Activated CD4-positive, alpha-beta T cell treated with anti-CD3 and anti-CD28 coated beads for 36 hours (primary cell): ENCODE measurements at regions of chr12 and their contacts with region 1.

Region 1: GRCh38 chr12:122752464-122753318 is at the start of gene DENR:
- DNase-seq: peak; percentile 100
- ATAC-seq: peak; percentile 95
- H3K4me3 Mint-ChIP-seq: peak within 1 kb of the TSS; percentile 92
- H3K27ac Mint-ChIP-seq: peak within 1 kb of the TSS; percentile 96
- H3K4me1 Mint-ChIP-seq: peaks cover 53% of the 10 kb centered on the region
- H3K27me3 Mint-ChIP-seq: no peaks in the 10 kb centered on the region
- total RNA-seq, gene DENR: 64.1 to 76.9 TPM

Region 2: GRCh38 chr12:122399592-122400373 is 352.9 kb before region 1 on chr12:
- CTCF ChIA-PET with region 1: interaction called, 3 read pairs
- POLR2A ChIA-PET with region 1: no interaction called
- intact Hi-C with region 1: loop called (anchors 1 to 10 kb)
- DNase-seq: peak; percentile 73
- ATAC-seq: peak; percentile 37
- H3K4me3 Mint-ChIP-seq: peak overlapping the region; percentile 43
- H3K27ac Mint-ChIP-seq: peak overlapping the region; percentile 86
- H3K4me1 Mint-ChIP-seq: peaks cover 50% of the 10 kb centered on the region
- H3K27me3 Mint-ChIP-seq: no peaks in the 10 kb centered on the region

Region 3: GRCh38 chr12:122500685-122501488 is 251.8 kb before region 1 on chr12 and contains the start of gene ZCCHC8:
- CTCF ChIA-PET with region 1: no interaction called
- POLR2A ChIA-PET with region 1: no interaction called
- intact Hi-C with region 1: loop called in 1 of 2 experiments (anchors 1 kb)
- DNase-seq: peak; percentile 99
- ATAC-seq: peak; percentile 95
- H3K4me3 Mint-ChIP-seq: peak within 1 kb of the TSS; percentile 97
- H3K27ac Mint-ChIP-seq: peak within 1 kb of the TSS; percentile 98
- H3K4me1 Mint-ChIP-seq: peaks cover 32% of the 10 kb centered on the region
- H3K27me3 Mint-ChIP-seq: no peaks in the 10 kb centered on the region
- total RNA-seq, gene ZCCHC8: 34.7 to 39.1 TPM

Region 4: GRCh38 chr12:122721057-122721545 is 31.6 kb before region 1 on chr12:
- CTCF ChIA-PET with region 1: no interaction called
- POLR2A ChIA-PET with region 1: no interaction called
- intact Hi-C with region 1: loop called in 1 of 2 experiments (anchors 1 kb)
- DNase-seq: peak; percentile 26
- ATAC-seq: peak; percentile 64
- H3K4me3 Mint-ChIP-seq: no peak overlapping the region
- H3K27ac Mint-ChIP-seq: peak overlapping the region; percentile 80
- H3K4me1 Mint-ChIP-seq: peaks cover 41% of the 10 kb centered on the region
- H3K27me3 Mint-ChIP-seq: no peaks in the 10 kb centered on the region

Region 5: GRCh38 chr12:122974274-122974891 is 221.7 kb after region 1 on chr12:
- CTCF ChIA-PET with region 1: no interaction called
- POLR2A ChIA-PET with region 1: no interaction called
- intact Hi-C with region 1: loop called in 1 of 2 experiments (anchors 1 kb)
- DNase-seq: peak; percentile 99
- ATAC-seq: peak; percentile 86
- H3K4me3 Mint-ChIP-seq: peak overlapping the region; percentile 95
- H3K27ac Mint-ChIP-seq: peak overlapping the region; percentile 100
- H3K4me1 Mint-ChIP-seq: peaks cover 21% of the 10 kb centered on the region
- H3K27me3 Mint-ChIP-seq: no peaks in the 10 kb centered on the region

Region 6: DNA sequence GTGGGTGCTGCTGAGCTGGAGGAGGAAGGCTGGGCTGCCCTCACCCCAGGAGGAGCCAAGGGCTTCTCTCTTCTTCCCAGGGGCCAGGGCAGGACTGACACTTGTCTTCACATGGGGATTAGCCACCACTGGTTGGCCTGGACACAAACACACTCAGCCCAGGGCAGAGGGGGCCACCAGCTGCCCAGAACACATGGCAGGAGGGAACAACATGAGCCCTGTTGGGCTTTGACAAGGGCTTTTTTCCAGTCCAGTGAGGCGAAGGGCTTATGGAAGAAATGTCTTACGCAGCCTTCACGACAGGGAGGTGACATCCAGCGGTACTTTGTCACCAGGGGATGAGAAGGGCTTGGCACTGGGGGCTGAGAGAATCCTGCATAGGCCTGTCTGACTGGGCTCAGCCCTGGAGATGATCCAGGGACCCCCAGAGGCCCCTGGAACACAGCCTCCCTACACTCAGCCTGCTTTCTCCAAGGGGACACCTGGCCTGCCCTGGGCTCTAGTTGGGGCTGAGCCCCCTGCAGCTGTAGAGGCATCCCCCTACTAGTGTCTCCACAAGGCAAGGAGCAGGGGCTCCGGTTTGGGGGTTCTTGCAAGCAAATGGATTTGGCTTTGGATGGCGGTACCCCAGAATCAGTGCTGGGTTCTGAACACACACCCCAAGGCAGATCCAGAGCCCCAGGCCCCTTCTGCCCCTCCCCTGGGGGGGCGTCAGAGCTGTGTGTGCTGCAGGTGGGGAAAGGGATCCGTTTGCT is 246.7 kb after region 1 on chr12:
- CTCF ChIA-PET with region 1: no interaction called
- POLR2A ChIA-PET with region 1: no interaction called
- intact Hi-C with region 1: no loop called
- DNase-seq: no peak
- ATAC-seq: no peak
- H3K4me3 Mint-ChIP-seq: no peak overlapping the region
- H3K27ac Mint-ChIP-seq: no peak overlapping the region
- H3K4me1 Mint-ChIP-seq: no peaks in the 10 kb centered on the region
- H3K27me3 Mint-ChIP-seq: no peaks in the 10 kb centered on the region